ENCODE measurements at regions of chr6 and their contacts with region 1.

Region 1: DNA sequence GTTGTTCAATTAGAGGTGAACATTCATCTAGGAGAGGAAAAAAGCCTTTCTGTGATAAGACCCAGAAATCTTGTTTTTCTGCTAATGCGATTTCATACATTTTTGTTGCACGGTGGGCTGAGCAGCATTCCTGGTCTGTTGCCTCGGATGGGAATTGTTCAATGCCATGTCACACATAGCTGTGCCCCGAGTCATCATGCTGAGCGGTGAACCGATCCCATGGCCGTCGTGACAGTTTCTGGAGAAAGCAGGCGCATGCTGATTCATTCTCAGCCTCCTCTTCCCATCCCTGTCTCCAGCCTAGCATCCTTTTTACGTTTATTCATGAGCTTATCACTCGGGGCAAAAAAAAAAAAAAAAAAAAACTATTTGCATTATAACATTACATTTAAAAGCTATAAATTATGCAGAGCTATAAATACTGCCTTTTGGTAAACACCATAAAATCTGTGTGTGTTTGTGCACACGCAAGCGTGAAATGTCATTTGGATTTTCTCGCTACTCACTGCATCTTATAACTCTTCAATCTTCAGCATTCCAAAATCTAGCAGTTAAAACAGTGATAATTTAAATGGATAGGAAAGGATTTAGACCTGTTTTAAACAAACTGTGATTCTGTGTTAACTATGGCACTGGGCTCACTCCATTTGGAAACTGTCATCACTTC is 58.9 kb upstream of the IFNGR1 start:
- DNase-seq: no peak
- ATAC-seq: no peak
- H3K4me3 ChIP-seq: no peak overlapping the region
- H3K27ac ChIP-seq: no peak overlapping the region
- H3K4me1 ChIP-seq: peaks cover 0 to 8% of the 10 kb centered on the region in 2 donors
- H3K27me3 ChIP-seq: no peaks in the 10 kb centered on the region
- CTCF ChIP-seq: no peak

Region 2: GRCh38 chr6:137415127-137415833 is 137.2 kb after region 1 on chr6:
- intact Hi-C with region 1: loop called in 1 of 2 experiments (anchors 5 kb)
- DNase-seq: peak; percentile 50 to 74 (median 70)
- ATAC-seq: peak; percentile 98
- H3K4me3 ChIP-seq: peak overlapping the region; percentile 29 to 36
- H3K27ac ChIP-seq: peak overlapping the region; percentile 48 to 79
- H3K4me1 ChIP-seq: peaks cover 0 to 6% of the 10 kb centered on the region in 2 donors
- H3K27me3 ChIP-seq: peaks cover 5 to 23% of the 10 kb centered on the region in 2 donors
- CTCF ChIP-seq: peak; percentile 53 to 67

Measured in left lung (tissue), 14 donors.